MCF 10A (cell line): ENCODE measurements at regions of chr7 and their contacts with region 1.

Region 1: DNA sequence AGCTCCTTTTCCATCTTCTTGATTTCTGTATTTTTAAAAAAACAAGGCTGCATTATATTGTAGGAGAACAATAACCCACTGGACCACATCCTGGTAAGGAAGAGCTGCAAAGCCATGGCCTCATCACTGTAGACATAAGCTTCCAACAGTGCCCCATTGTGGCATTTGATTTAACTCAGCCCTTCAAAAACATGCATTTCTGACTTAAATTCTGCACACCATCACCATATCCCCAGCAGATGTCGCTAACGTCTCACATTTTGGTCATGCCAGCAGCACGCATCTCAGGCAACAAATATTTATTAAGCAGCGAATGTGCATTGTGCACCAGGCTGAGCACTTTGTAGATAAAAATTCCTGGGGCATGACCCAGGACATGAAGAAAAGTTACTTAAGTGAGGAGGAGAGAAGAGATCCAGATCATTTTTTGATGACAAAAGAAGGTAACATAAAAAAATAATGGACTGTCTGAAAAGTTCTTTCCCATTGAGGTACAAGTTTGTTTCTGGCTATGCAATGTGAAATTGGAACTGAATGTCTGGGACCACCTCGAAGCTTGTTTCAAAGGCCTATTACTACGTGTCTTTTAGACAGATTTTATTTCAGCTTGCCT is 164.6 kb upstream of the CDCA7L start:
- DNase-seq: peak; percentile 81
- H3K4me3 Mint-ChIP-seq: no peak overlapping the region
- H3K27ac Mint-ChIP-seq: no peak overlapping the region
- H3K4me1 Mint-ChIP-seq: no peaks in the 10 kb centered on the region
- H3K27me3 Mint-ChIP-seq: no peaks in the 10 kb centered on the region
- CTCF ChIP-seq: peak; percentile 87

Region 2: DNA sequence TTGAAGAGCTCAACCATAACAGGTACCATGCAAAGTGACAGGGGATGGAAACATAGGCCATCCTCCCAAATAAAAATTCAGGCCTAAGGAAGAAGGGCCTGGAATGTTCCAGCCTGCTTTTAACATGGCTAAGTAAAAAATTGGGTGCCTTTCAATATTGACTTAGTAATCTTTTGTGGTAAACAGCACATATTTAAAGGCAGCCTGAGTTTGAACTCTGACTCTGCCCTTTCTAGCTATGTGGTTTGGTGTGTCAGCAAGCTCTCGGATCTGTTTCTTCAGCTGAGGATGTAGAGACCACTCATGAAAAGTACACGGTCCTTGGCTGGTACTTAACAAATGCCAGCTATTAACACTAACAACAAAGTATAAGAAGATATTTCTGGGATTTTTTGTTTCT is 27.1 kb after region 1 on chr7:
- CTCF ChIA-PET with region 1: interaction called, 17 read pairs
- POLR2A ChIA-PET with region 1: no interaction called
- intact Hi-C with region 1: no loop called
- DNase-seq: no peak
- H3K4me3 Mint-ChIP-seq: no peak overlapping the region
- H3K27ac Mint-ChIP-seq: no peak overlapping the region
- H3K4me1 Mint-ChIP-seq: no peaks in the 10 kb centered on the region
- H3K27me3 Mint-ChIP-seq: no peaks in the 10 kb centered on the region
- CTCF ChIP-seq: no peak

Region 3: GRCh38 chr7:22302951-22303423 is 192.7 kb after region 1 on chr7:
- CTCF ChIA-PET with region 1: interaction called, 10 read pairs
- POLR2A ChIA-PET with region 1: no interaction called
- intact Hi-C with region 1: no loop called
- DNase-seq: no peak
- H3K4me3 Mint-ChIP-seq: no peak overlapping the region
- H3K27ac Mint-ChIP-seq: no peak overlapping the region
- H3K4me1 Mint-ChIP-seq: no peaks in the 10 kb centered on the region
- H3K27me3 Mint-ChIP-seq: no peaks in the 10 kb centered on the region
- CTCF ChIP-seq: no peak

Region 4: DNA sequence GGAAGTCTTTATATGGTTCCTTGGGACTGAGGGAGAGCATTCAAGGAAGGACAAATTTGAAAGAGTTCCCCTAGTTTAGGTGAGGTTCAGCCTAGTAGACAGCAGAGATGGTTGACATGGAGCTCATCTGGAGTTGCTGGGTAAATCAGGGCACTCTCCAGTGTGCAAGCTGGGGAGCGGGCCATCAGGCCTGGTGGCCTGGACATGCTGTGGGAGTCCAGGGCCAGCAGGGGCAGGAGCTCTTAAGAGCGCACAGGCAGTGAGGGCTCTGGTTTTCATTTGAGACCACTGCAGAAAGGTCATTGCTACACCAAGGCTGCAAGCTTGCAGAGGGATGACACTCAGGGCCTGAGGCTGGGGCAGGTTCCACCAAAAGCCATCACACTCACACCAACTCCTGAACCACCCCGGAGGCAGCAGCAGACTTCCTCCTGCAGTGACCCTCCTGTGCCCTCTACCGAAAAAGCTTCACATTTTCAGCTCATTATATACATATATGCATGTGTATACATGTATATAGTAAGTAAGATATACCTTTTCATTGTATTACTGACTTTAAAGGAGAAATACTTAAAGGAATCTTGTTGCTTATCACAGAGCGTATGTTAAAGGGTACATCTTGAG is 350.1 kb after region 1 on chr7:
- CTCF ChIA-PET with region 1: interaction called, 10 read pairs
- POLR2A ChIA-PET with region 1: no interaction called
- intact Hi-C with region 1: no loop called
- DNase-seq: no peak
- H3K4me3 Mint-ChIP-seq: no peak overlapping the region
- H3K27ac Mint-ChIP-seq: no peak overlapping the region
- H3K4me1 Mint-ChIP-seq: no peaks in the 10 kb centered on the region
- H3K27me3 Mint-ChIP-seq: no peaks in the 10 kb centered on the region
- CTCF ChIP-seq: no peak

Region 5: DNA sequence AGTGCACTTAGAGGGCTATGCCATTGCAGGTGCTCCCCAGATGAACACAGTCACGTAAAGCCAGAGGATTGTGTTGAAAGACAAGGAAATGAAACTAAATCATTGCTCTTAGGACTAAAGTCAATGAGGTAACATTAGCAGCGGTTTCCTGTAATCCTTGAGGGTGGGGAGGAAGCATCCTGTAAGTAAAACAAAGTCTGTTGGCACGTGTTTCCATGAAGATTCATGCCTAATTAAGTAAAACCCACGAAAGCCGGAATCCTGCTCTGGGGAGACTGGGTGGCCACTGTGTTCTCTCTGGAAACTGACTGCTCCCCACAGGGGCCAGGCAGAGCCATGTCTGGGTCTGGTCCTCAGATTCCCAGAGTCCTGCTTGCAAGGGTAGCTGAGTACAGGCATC is 371.4 kb after region 1 on chr7:
- CTCF ChIA-PET with region 1: interaction called, 88 read pairs
- POLR2A ChIA-PET with region 1: no interaction called
- intact Hi-C with region 1: no loop called
- DNase-seq: no peak
- H3K4me3 Mint-ChIP-seq: no peak overlapping the region
- H3K27ac Mint-ChIP-seq: no peak overlapping the region
- H3K4me1 Mint-ChIP-seq: no peaks in the 10 kb centered on the region
- H3K27me3 Mint-ChIP-seq: no peaks in the 10 kb centered on the region
- CTCF ChIP-seq: no peak